PC-3 (cell line): ENCODE measurements at regions of chr16 and their contacts with region 1.

Region 1: GRCh38 chr16:77043076-77043475 is 147.9 kb upstream of the MON1B start:
- DNase-seq: peak; percentile 43
- ATAC-seq: peak; percentile 31; the same call in 1 of the 2 replicates
- H3K4me3 ChIP-seq: no peak overlapping the region
- H3K27ac ChIP-seq: no peak overlapping the region
- H3K4me1 ChIP-seq: no peaks in the 10 kb centered on the region
- H3K27me3 ChIP-seq: peaks cover 34% of the 10 kb centered on the region
- CTCF ChIP-seq: peak; percentile 61

Region 2: DNA sequence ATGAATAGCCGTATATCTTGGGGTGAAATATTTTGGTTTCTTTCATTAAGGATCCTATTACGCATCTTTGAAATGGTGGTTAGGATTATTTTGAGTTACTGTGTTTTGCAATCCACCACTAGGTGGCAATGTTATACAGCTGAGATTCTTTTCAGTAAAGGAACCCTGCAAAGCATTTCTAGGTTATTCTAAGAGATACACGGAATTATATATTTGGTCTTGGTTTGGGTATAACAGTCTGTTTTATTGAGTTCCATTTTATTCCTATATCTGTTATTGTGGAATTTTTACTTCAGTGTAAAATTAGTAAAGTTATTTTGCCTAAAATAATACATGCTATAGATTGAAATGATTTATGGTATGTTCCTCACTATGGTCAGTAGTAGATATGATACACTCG is 1253.8 kb before region 1 on chr16:
- CTCF ChIA-PET with region 1: no interaction called
- POLR2A ChIA-PET with region 1: no interaction called
- intact Hi-C with region 1: loop called (anchors 10 kb)
- DNase-seq: peak; percentile 67
- ATAC-seq: peak; percentile 50; the same call in 1 of the 2 replicates
- H3K4me3 ChIP-seq: no peak overlapping the region
- H3K27ac ChIP-seq: no peak overlapping the region
- H3K4me1 ChIP-seq: no peaks in the 10 kb centered on the region
- H3K27me3 ChIP-seq: 0 out of 2 replicates have a peak, but pooled peaks cover 5% of the 10 kb centered on the region
- CTCF ChIP-seq: peak; percentile 84

Region 3: GRCh38 chr16:76854234-76854633 is 188.8 kb before region 1 on chr16:
- CTCF ChIA-PET with region 1: no interaction called
- POLR2A ChIA-PET with region 1: no interaction called
- intact Hi-C with region 1: loop called (anchors 5 kb)
- DNase-seq: peak; percentile 29
- ATAC-seq: peak; percentile 48
- H3K4me3 ChIP-seq: no peak overlapping the region
- H3K27ac ChIP-seq: no peak overlapping the region
- H3K4me1 ChIP-seq: no peaks in the 10 kb centered on the region
- H3K27me3 ChIP-seq: peaks cover 20% of the 10 kb centered on the region
- CTCF ChIP-seq: peak; percentile 52; the same call in 1 of the 2 replicates

Region 4: GRCh38 chr16:77077256-77077922 is 34.3 kb after region 1 on chr16:
- CTCF ChIA-PET with region 1: no interaction called
- POLR2A ChIA-PET with region 1: no interaction called
- intact Hi-C with region 1: no loop called
- DNase-seq: no peak
- ATAC-seq: no peak
- H3K4me3 ChIP-seq: no peak overlapping the region
- H3K27ac ChIP-seq: no peak overlapping the region
- H3K4me1 ChIP-seq: no peaks in the 10 kb centered on the region
- H3K27me3 ChIP-seq: peaks cover 36% of the 10 kb centered on the region
- CTCF ChIP-seq: no peak